ENCODE measurements at regions of chr2 and their contacts with region 1.

Region 1: GRCh38 chr2:165293440-165294353 is 54.5 kb downstream of the SCN2A start:
- DNase-seq: peak in 1 of 2 donors; percentile 79
- ATAC-seq: peak; percentile 95 to 100 (median 98)
- H3K4me3 ChIP-seq: no peak overlapping the region
- H3K27ac ChIP-seq: no peak overlapping the region
- H3K4me1 ChIP-seq: peaks cover 0 to 5% (median 0%) of the 10 kb centered on the region in 9 donors
- H3K27me3 ChIP-seq: no peaks in the 10 kb centered on the region
- CTCF ChIP-seq: peak; percentile 53 to 80 (median 76)

Region 2: DNA sequence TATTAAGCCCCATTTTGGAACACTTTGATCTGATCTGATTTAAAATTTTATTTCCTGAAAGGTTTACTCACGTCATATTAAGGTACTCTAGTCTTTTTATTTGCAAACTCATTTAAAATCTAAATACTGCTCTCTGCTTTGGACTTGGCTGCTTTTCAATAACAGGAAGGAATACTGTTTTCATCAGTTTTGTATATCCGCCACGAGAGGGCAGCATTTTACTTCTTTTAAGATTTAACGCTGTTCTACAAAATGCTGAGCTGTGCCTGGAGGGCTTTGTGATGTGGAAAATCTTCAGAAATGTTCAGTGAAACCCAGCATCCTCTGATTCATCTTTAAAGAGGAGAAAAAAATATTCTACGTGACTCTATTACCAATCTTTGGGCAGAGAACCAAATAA is 300.9 kb before region 1 on chr2:
- intact Hi-C with region 1: loop called in 4 of 10 experiments (anchors 5 to 10 kb)
- DNase-seq: peak in 1 of 2 donors; percentile 73
- ATAC-seq: peak in 7 of 8 donors; percentile 55 to 80 (median 65)
- H3K4me3 ChIP-seq: no peak overlapping the region
- H3K27ac ChIP-seq: no peak overlapping the region
- H3K4me1 ChIP-seq: peaks cover 0 to 18% (median 9%) of the 10 kb centered on the region in 9 donors
- H3K27me3 ChIP-seq: no peaks in the 10 kb centered on the region
- CTCF ChIP-seq: peak; percentile 26 to 70 (median 58)

Region 3: DNA sequence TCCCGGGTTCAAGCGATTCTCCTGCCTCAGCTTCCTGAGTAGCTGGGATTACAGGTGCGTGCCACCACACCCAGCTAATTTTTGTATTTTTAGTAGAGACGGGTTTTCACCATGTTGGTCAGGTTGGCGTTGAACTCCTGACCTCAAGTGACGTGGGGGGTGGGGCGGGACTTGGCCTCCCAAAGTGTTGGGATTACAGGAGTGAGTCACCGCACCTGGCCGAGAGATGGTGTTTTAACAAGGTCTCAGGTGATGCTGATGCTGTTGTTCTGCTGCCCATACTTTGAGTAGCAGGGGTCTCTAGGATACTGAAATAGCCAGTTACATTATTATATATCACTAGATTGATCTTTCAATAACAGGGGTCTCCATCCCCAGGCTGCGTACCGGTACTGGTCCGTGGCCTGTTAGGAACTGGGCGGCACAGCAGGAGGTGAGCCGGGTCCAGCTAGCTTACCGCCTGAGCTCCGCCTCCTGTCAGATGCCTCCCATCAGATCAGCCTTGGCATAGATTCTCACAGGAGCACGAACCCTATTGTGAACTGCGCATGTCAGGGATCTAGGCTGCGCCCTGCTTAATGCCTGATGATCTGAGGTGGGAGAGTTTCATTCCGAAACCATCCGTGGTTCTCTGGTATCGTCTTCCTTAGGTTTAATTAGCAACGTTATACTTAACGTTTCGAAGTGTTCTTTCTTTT is 290.1 kb before region 1 on chr2:
- intact Hi-C with region 1: loop called in 5 of 10 experiments (anchors 5 to 10 kb)
- DNase-seq: no peak
- ATAC-seq: no peak
- H3K4me3 ChIP-seq: no peak overlapping the region
- H3K27ac ChIP-seq: no peak overlapping the region
- H3K4me1 ChIP-seq: peaks cover 0 to 11% (median 0%) of the 10 kb centered on the region in 9 donors
- H3K27me3 ChIP-seq: no peaks in the 10 kb centered on the region
- CTCF ChIP-seq: no peak

Region 4: GRCh38 chr2:165239230-165239629 is 54.5 kb before region 1 on chr2 and contains the start of gene SCN2A:
- intact Hi-C with region 1: loop called in 8 of 10 experiments (anchors 1 to 10 kb)
- DNase-seq: no peak
- ATAC-seq: no peak
- H3K4me3 ChIP-seq: no peak within 1 kb of the TSS
- H3K27ac ChIP-seq: no peak within 1 kb of the TSS
- H3K4me1 ChIP-seq: no peaks in the 10 kb centered on the region
- H3K27me3 ChIP-seq: peaks cover 0 to 24% (median 0%) of the 10 kb centered on the region in 7 donors
- CTCF ChIP-seq: peak; percentile 46 to 85 (median 69)
- total RNA-seq, gene SCN2A: 0.04 to 0.26 (median 0.07) TPM in 8 of 10 donors, not detected in the others

Region 5: GRCh38 chr2:165544897-165545296 is 251.2 kb after region 1 on chr2:
- intact Hi-C with region 1: no loop called
- DNase-seq: no peak
- ATAC-seq: no peak
- H3K4me3 ChIP-seq: no peak overlapping the region
- H3K27ac ChIP-seq: no peak overlapping the region
- H3K4me1 ChIP-seq: no peaks in the 10 kb centered on the region
- H3K27me3 ChIP-seq: no peaks in the 10 kb centered on the region
- CTCF ChIP-seq: no peak